ENCODE measurements at regions of chr3 and their contacts with region 1.

Region 1: GRCh38 chr3:146160964-146161662 is at the start of gene PLOD2:
- DNase-seq: peak; percentile 93
- H3K4me3 Mint-ChIP-seq: peak within 1 kb of the TSS; percentile 66
- H3K27ac Mint-ChIP-seq: peak within 1 kb of the TSS; percentile 97
- H3K4me1 Mint-ChIP-seq: peaks cover 40% of the 10 kb centered on the region
- H3K27me3 Mint-ChIP-seq: no peaks in the 10 kb centered on the region
- CTCF ChIP-seq: no peak
- total RNA-seq, gene PLOD2: 84.0 and 123 TPM in 2 replicates

Region 2: DNA sequence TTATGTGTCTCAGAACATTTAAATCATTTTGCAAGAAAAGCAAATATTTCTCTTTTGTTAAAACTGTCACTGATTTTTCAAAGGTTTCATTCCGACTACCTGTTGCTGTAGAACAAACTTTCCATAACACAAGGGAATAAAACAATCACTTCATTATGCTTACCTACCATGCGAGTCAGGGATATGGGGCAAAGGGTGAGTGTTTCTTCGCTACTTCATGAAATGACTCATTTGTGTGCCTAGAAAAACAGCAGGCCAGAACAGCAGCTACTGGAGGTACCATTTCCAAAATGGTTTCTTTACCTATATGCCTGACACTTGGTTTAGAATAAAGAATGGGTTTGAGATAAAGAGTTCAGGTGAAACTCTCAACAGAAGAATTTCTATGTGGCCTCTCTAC is 712.7 kb before region 1 on chr3:
- CTCF ChIA-PET with region 1: no interaction called
- intact Hi-C with region 1: loop called (anchors 10 kb)
- DNase-seq: peak; percentile 73
- H3K4me3 Mint-ChIP-seq: peak overlapping the region; percentile 15
- H3K27ac Mint-ChIP-seq: peak overlapping the region; percentile 63
- H3K4me1 Mint-ChIP-seq: peaks cover 36% of the 10 kb centered on the region
- H3K27me3 Mint-ChIP-seq: no peaks in the 10 kb centered on the region
- CTCF ChIP-seq: no peak

Region 3: DNA sequence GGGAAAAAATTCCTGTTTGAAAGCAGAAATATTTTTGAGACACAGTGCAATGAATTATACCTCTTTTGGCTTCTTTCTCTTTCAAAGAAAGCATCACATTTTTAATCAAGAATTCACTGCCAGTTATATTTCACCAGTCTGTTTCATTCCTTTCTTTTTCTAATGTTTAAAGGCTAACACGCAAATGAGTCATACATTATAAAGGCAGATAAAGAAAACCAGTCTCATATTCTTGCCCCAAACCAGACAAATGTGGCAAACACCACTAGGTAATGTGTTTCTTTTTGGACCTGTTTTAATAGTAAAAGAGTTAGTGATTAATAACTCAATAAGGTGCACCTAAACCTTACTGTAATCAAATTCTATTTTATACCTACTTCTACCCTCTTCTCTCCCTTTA is 83.9 kb before region 1 on chr3:
- CTCF ChIA-PET with region 1: interaction called, 3 read pairs
- intact Hi-C with region 1: loop called (anchors 2 kb)
- DNase-seq: no peak
- H3K4me3 Mint-ChIP-seq: peak overlapping the region; percentile 20
- H3K27ac Mint-ChIP-seq: peak overlapping the region; percentile 90
- H3K4me1 Mint-ChIP-seq: peaks cover 52% of the 10 kb centered on the region
- H3K27me3 Mint-ChIP-seq: no peaks in the 10 kb centered on the region
- CTCF ChIP-seq: no peak

Region 4: GRCh38 chr3:146189519-146190173 is 28.5 kb after region 1 on chr3:
- CTCF ChIA-PET with region 1: interaction called, 14 read pairs
- intact Hi-C with region 1: loop called (anchors 1 kb)
- DNase-seq: peak; percentile 57
- H3K4me3 Mint-ChIP-seq: peak overlapping the region; percentile 26
- H3K27ac Mint-ChIP-seq: peak overlapping the region; percentile 66
- H3K4me1 Mint-ChIP-seq: peaks cover 14% of the 10 kb centered on the region
- H3K27me3 Mint-ChIP-seq: no peaks in the 10 kb centered on the region
- CTCF ChIP-seq: peak; percentile 81

Region 5: DNA sequence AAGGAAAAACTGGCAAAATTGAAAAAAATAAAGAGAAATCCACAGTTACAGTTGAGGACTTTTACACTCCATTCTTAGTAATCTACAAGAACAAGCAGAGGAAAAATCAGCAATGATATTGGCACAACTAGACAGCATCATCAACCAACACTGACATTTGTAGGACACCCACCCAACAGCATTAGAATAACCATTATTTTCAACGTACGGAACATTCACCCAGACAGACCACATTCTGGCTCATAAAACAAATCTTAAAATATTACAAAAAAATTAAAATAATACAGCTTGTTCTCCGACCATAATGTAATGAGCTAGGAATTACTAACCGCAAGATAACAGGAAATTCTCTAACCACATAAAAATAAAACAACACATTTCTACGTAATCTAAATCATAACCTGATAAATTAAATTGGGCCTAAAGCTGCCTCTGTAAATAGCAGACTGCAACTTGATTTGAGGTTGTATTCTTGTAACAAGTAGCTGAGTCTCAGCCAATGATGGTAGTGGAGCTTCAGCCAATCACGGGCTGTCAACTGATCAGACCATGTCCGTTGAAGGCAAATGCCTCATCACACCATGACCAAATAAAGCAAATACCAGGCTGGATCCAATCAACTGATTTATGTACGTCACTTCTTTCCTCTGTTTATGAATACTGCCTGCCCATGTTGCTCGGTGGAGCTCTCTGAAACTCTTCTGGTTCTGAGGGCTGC is 80.6 kb after region 1 on chr3:
- CTCF ChIA-PET with region 1: no interaction called
- intact Hi-C with region 1: no loop called
- DNase-seq: no peak
- H3K4me3 Mint-ChIP-seq: no peak overlapping the region
- H3K27ac Mint-ChIP-seq: no peak overlapping the region
- H3K4me1 Mint-ChIP-seq: no peaks in the 10 kb centered on the region
- H3K27me3 Mint-ChIP-seq: no peaks in the 10 kb centered on the region
- CTCF ChIP-seq: no peak